AG04449 (cell line): ENCODE measurements at regions of chr9 and their contacts with region 1.

Region 1: GRCh38 chr9:70602321-70603019 is 188.0 kb upstream of the KLF9 start:
- DNase-seq: peak; percentile 61
- H3K4me3 ChIP-seq: no peak overlapping the region; the same call in 1 of the 2 replicates
- CTCF ChIP-seq: peak; percentile 64

Region 2: GRCh38 chr9:70340572-70340971 is 261.9 kb before region 1 on chr9:
- CTCF ChIA-PET with region 1: interaction called, 175 read pairs
- POLR2A ChIA-PET with region 1: interaction called, 4 read pairs
- DNase-seq: no peak
- H3K4me3 ChIP-seq: no peak overlapping the region
- CTCF ChIP-seq: peak; percentile 8

Region 3: DNA sequence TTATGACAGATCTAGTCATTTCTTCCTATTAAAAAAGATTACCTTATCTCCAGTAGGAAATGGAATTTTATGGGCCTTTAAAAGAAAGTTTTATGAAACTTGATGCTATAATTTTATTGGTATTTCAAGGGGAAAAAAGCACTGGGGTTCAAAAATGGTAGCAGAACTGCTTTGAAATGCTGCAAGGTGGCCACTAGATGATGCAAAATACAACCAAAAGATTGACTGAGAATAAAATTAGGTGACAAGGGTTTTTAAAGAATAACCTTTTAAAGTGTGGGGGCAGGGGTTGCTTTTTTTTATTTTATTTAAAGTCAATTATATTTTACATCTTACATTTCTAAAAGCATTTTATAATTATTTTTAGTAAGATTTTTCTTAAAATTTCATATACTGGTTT is 249.7 kb before region 1 on chr9:
- CTCF ChIA-PET with region 1: interaction called, 15 read pairs
- POLR2A ChIA-PET with region 1: no interaction called
- DNase-seq: no peak
- H3K4me3 ChIP-seq: no peak overlapping the region
- CTCF ChIP-seq: no peak

Region 4: DNA sequence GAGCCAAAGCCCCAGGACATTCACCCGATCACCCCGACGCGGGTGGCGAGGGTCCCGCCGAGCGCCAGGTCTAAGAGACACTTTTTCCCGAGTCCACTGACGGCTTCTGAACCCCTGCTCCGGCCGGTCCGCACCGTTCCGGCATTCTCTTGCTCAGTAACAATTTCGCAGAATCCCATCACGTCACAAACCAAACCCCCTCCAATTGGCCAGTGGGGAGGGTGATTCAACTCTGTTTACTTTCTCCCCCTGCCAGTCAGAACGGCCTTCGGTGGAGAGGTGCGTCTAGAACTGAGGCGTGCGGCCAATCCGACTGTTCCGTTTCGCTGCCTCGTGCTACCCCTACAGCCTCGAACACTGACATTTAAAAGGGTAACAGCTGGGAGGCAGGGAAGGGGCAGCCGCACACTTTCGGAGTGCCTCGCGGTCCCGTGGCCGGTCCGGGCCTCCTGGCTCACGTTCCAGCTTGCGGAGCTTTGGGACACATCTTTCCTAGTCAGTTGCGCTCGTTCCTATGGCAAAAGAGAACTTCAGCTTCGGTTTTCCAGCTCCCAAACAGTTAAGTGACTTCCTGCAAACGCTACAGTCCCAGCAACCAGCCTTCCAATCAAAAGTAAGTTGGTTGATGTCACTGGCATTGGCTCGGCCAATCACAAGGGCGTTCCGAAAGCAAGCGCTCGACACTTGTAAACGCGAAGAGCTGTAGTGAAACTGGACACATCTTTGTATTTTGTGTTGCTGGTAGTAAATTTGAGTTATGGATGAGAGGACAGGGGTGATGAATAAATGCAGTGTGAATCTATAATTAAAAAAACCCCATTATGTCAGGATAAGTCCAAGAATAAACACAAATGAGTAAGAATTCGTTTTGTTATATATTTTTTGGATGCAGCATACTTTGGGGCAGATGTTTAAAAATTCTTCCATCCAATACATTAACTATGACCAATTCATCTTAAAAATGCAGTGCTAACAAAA is 188.4 kb before region 1 on chr9 and contains the start of gene KLF9:
- CTCF ChIA-PET with region 1: interaction called, 35 read pairs
- POLR2A ChIA-PET with region 1: interaction called, 51 read pairs
- DNase-seq: peak; percentile 93
- H3K4me3 ChIP-seq: peak within 1 kb of the TSS; percentile 91
- CTCF ChIP-seq: no peak

Region 5: GRCh38 chr9:70613024-70613768 is 10.7 kb after region 1 on chr9:
- CTCF ChIA-PET with region 1: interaction called, 10 read pairs
- POLR2A ChIA-PET with region 1: no interaction called
- DNase-seq: no peak
- H3K4me3 ChIP-seq: no peak overlapping the region
- CTCF ChIP-seq: no peak

Region 6: GRCh38 chr9:70772601-70773000 is 170.1 kb after region 1 on chr9:
- CTCF ChIA-PET with region 1: no interaction called
- POLR2A ChIA-PET with region 1: no interaction called
- DNase-seq: no peak
- H3K4me3 ChIP-seq: no peak overlapping the region
- CTCF ChIP-seq: no peak